ENCODE measurements at regions of chr3 and their contacts with region 1.

Region 1: DNA sequence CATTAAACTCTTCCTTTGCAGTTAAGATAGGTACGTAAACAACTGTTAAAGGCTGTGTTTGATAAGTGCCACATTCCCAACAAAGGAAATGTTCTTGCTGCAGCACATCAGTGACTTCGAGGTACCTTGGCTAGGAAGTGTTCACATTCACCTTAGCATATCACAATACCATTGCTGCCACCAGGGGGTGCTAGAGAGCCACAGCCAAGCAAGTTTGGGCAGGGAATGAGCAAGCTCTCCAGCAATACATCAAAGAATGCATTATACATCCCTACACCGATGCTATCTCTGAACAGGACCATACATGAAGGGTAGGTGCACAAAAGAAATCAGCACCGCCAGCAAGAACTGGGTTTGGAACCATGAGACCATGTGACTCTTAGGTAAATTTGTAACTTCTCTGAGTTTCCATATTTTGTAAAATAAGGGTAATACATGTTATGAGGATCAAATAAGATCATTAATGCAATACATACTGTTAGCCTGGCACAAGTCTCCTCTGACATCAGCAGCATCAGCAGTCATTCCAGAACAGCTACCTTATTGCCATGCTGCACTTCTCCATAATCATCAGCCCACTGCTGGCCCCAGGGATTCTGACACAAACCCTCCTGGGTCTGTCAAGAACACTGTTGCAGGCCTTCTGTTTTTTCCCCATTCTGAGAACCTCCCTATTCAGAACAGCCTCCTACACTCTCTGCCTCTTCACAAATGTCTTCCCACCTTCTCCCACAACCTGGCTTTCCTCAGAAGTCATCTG is 37.6 kb downstream of the RYK start:
- DNase-seq: peak; percentile 86
- ATAC-seq: peak; percentile 81
- H3K4me3 Mint-ChIP-seq: no peak overlapping the region
- H3K27ac Mint-ChIP-seq: no peak overlapping the region
- H3K4me1 Mint-ChIP-seq: peaks cover 15% of the 10 kb centered on the region
- H3K27me3 Mint-ChIP-seq: no peaks in the 10 kb centered on the region

Region 2: DNA sequence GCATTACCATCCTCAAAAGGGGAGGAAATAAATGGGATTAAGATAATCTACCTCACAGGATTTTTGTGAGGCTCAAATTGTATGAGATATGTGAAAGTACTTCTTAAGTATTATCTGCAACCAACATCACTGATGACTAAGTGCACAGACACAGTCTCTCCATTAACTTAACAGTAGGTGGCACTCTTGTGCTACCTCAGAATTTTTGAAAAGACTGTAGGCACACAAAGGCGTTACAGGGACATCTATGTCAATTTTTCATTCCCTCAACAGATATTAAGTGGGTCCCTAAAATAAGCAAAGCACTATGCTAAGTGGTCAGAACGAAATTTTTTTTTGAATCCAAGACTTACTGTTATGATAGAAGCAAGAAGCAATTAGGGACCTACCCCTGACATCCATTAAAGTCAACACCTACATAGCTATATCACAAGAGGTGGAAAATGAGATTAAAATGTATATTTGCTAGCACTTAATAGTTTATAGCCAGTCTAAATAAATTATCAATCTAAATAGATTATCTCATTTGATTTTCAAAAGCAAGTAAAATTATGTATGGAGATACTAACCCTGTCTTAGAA is 15.3 kb before region 1 on chr3:
- CTCF ChIA-PET with region 1: interaction called, 43 read pairs
- DNase-seq: no peak
- ATAC-seq: peak; percentile 71
- H3K4me3 Mint-ChIP-seq: no peak overlapping the region
- H3K27ac Mint-ChIP-seq: no peak overlapping the region
- H3K4me1 Mint-ChIP-seq: peaks cover 2% of the 10 kb centered on the region
- H3K27me3 Mint-ChIP-seq: no peaks in the 10 kb centered on the region

Region 3: DNA sequence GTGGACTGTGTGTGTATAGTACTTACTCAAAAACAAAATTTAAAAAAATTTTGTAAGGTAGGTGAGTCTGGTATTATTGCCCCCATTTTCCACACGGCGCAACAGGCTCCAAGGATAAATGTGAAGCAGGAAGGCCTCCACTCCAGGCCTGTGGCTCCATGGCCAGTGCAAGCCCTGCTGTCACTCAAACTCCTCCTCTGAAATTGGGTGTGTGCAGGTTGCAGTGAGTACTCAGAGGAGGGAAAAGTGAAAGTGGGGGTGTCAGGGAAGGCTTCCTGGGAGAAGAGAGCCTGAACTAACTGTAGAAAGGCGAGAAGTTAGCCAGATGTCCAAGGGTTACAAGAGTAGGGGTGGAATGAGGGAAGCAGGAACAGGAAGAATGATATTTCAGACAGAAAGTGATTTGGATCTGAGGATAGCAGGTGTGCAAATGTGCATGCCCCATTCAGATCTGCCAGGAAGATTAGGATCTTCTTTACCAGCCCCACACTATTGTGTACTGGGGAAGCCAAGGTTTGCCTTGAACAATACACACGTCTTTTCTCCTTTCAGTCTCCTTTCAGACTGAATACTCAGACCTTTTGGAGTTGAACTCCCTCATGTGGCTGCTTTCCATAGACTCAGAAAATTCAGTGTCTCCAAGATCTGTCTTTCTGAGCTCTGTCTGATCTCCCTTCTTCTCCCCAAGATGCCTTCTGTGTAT is 86.2 kb after region 1 on chr3:
- CTCF ChIA-PET with region 1: interaction called, 16 read pairs
- DNase-seq: no peak
- ATAC-seq: no peak
- H3K4me3 Mint-ChIP-seq: no peak overlapping the region
- H3K27ac Mint-ChIP-seq: no peak overlapping the region
- H3K4me1 Mint-ChIP-seq: no peaks in the 10 kb centered on the region
- H3K27me3 Mint-ChIP-seq: peaks cover 55% of the 10 kb centered on the region

Region 4: GRCh38 chr3:134308350-134308891 is 95.3 kb after region 1 on chr3:
- CTCF ChIA-PET with region 1: interaction called, 22 read pairs
- DNase-seq: peak; percentile 74
- ATAC-seq: peak; percentile 82
- H3K4me3 Mint-ChIP-seq: no peak overlapping the region
- H3K27ac Mint-ChIP-seq: no peak overlapping the region
- H3K4me1 Mint-ChIP-seq: peaks cover 3% of the 10 kb centered on the region
- H3K27me3 Mint-ChIP-seq: peaks cover 76% of the 10 kb centered on the region

Region 5: GRCh38 chr3:134473868-134474546 is 260.9 kb after region 1 on chr3:
- CTCF ChIA-PET with region 1: interaction called, 31 read pairs
- DNase-seq: peak; percentile 79
- ATAC-seq: peak; percentile 77
- H3K4me3 Mint-ChIP-seq: no peak overlapping the region
- H3K27ac Mint-ChIP-seq: no peak overlapping the region
- H3K4me1 Mint-ChIP-seq: no peaks in the 10 kb centered on the region
- H3K27me3 Mint-ChIP-seq: no peaks in the 10 kb centered on the region